Activated naive CD4-positive, alpha-beta T cell treated with anti-CD3 and anti-CD28 coated beads for 36 hours (primary cell): ENCODE measurements at regions of chr9 and their contacts with region 1.

Region 1: GRCh38 chr9:27573634-27574590 is 631 bp upstream of the C9orf72 start:
- DNase-seq: peak; percentile 99
- H3K4me3 Mint-ChIP-seq: peak overlapping the region; percentile 83
- H3K27ac Mint-ChIP-seq: peak overlapping the region; percentile 100
- H3K4me1 Mint-ChIP-seq: peaks cover 37% of the 10 kb centered on the region
- H3K27me3 Mint-ChIP-seq: no peaks in the 10 kb centered on the region

Region 2: GRCh38 chr9:26892251-26893029 is 681.5 kb before region 1 on chr9 and contains the start of gene CAAP1:
- CTCF ChIA-PET with region 1: no interaction called
- intact Hi-C with region 1: loop called (anchors 1 kb)
- DNase-seq: peak; percentile 96
- H3K4me3 Mint-ChIP-seq: peak within 1 kb of the TSS; percentile 99
- H3K27ac Mint-ChIP-seq: peak within 1 kb of the TSS; percentile 100
- H3K4me1 Mint-ChIP-seq: peaks cover 28% of the 10 kb centered on the region
- H3K27me3 Mint-ChIP-seq: no peaks in the 10 kb centered on the region
- total RNA-seq, gene CAAP1: 16.1 to 18.1 TPM

Region 3: DNA sequence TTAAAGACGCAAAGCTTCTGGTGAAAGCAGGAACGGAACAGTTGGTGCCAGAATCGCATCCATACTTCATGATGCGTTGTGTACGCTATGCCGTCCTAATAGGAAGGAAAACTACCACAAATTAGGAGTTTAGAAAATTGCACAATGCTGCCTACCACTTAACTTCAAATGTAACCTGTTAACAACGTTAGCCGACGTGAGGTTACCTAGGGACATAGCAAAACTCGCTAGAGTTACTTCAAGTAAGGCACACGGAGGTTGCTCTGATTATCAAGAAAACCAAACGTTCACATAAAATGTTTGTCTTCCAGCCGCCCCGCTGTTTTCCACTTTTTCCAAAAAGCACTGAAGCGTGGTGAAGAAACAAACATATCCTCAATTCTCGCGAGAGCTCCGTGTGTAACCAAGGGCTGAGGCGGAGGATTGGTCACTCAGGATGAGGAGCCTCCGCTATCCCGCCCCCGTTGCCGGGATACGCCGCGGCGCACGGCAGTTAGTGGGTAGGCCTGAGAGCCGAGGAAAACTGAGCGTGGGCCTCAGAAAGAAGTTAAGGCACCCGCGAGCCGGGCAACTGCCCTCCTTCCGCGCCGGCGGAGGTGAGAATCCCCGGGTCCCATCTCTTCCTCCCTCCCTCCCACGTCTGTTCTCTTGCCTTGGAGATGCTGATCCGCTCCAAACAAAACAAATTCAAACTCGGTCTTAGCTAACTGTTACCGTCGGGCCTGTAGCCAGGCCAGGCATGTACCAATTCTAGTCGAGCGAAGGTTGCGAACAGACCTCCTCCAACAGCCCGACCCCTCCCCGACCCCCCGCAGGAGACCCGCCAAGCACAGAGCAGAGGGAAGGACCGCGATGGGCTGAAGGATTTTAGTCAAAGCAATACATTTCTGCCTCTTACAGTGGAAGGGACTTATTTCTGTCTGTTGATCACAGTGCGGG is 617.7 kb before region 1 on chr9 and contains the start of gene IFT74:
- CTCF ChIA-PET with region 1: no interaction called
- intact Hi-C with region 1: loop called (anchors 1 kb)
- DNase-seq: peak; percentile 96
- H3K4me3 Mint-ChIP-seq: peak within 1 kb of the TSS; percentile 90
- H3K27ac Mint-ChIP-seq: peak within 1 kb of the TSS; percentile 87
- H3K4me1 Mint-ChIP-seq: peaks cover 25% of the 10 kb centered on the region
- H3K27me3 Mint-ChIP-seq: no peaks in the 10 kb centered on the region
- total RNA-seq, gene IFT74: 7.9 to 9.7 TPM

Region 4: DNA sequence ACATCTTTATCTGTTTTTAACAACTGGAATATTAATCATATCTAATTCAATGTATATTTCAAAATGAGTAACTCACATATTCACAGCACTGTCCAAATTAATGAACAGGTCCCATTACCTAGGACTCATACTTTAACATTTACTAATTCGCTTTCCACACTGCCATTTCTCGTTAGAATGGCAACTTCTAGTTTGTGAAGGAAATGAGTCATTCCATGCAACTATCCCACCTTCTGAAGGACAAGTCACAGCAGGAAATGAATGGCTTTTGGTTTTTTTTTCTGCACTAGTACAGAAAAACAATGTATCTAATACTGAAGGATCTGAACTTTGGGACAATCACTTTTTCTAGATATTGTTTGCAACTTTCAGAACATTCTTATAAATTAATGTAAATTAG is 74.4 kb before region 1 on chr9:
- CTCF ChIA-PET with region 1: no interaction called
- intact Hi-C with region 1: loop called (anchors 1 kb)
- DNase-seq: no peak
- H3K4me3 Mint-ChIP-seq: no peak overlapping the region
- H3K27ac Mint-ChIP-seq: peak overlapping the region; percentile 59
- H3K4me1 Mint-ChIP-seq: peaks cover 41% of the 10 kb centered on the region
- H3K27me3 Mint-ChIP-seq: peaks cover 1% of the 10 kb centered on the region

Region 5: DNA sequence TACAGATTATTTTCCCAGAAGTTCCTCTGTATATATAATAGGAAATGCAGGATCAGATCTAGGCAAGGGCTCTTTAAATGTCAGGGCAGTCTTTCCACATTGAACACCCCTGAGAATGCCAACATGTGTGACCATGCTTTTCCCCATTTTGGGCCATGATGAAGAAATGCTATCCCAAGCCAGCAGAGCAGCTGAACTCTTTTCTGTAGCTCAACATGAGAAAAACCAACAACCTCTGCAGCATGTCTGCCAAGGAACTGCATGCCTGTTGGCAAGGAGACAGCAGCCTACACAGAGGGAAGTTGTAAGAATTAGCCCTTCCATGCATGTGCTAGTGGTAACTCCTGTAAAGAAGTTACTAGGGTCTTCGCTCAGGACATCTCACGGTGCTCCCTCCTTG is 59.4 kb before region 1 on chr9:
- CTCF ChIA-PET with region 1: no interaction called
- intact Hi-C with region 1: no loop called
- DNase-seq: no peak
- H3K4me3 Mint-ChIP-seq: no peak overlapping the region
- H3K27ac Mint-ChIP-seq: no peak overlapping the region
- H3K4me1 Mint-ChIP-seq: no peaks in the 10 kb centered on the region
- H3K27me3 Mint-ChIP-seq: no peaks in the 10 kb centered on the region

Region 6: GRCh38 chr9:27529316-27530278 is 44.3 kb before region 1 on chr9 and contains the start of gene MOB3B:
- CTCF ChIA-PET with region 1: interaction called, 5 read pairs
- intact Hi-C with region 1: loop called (anchors 1 kb)
- DNase-seq: peak; percentile 80
- H3K4me3 Mint-ChIP-seq: peak within 1 kb of the TSS; percentile 86
- H3K27ac Mint-ChIP-seq: peak within 1 kb of the TSS; percentile 86
- H3K4me1 Mint-ChIP-seq: peaks cover 10% of the 10 kb centered on the region
- H3K27me3 Mint-ChIP-seq: peaks cover 8% of the 10 kb centered on the region
- total RNA-seq, gene MOB3B: 3.0 to 3.2 TPM

Region 7: GRCh38 chr9:27610622-27611021 is 36.7 kb after region 1 on chr9:
- CTCF ChIA-PET with region 1: no interaction called
- intact Hi-C with region 1: no loop called
- DNase-seq: no peak
- H3K4me3 Mint-ChIP-seq: no peak overlapping the region
- H3K27ac Mint-ChIP-seq: no peak overlapping the region
- H3K4me1 Mint-ChIP-seq: no peaks in the 10 kb centered on the region
- H3K27me3 Mint-ChIP-seq: peaks cover 11% of the 10 kb centered on the region